Activated T-helper 2 cell treated with anti-CD3 and anti-CD28 coated beads, Interferon-gamma antibody, Interleukin-2, Interleukin-4, amounts not matched to agents 10 μg/mL and 5 μg/mL and 100 μg/mL, durations not matched to agents 14 hours and 24 hours and 36 hours (primary cell): ENCODE measurements at regions of chr10 and their contacts with region 1.

Region 1: DNA sequence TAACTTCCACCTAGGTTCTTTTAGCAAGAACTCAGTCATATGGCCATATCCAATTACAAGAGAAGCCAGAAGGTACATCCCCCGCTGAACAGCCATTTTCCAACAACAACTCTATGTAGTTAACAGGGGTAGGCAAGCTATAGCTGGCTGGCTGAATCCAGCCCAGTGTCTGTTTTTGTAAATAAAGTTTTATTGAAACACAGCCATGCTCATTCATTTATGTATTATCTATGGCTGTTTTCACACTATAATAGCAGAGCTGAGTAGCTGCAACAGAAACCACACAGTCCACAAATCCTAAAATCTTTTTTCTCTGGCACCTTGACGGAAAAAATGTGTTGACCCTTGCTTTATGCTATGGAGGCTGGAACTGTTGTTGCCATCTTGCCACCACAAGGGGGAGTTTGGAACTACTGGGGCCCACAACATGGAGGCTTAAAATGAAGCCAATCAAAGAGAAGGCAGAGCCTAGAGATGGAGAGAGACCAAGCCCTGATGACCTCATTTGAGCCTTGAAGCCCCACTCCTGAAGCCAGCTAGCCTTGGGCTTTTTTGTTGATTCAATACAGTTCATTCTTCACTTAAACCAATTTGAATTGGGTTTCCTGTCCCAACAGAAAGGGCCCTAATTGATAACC is 33.3 kb upstream of the XPNPEP1 start:
- DNase-seq: no peak
- H3K4me3 Mint-ChIP-seq: no peak overlapping the region
- H3K27ac Mint-ChIP-seq: no peak overlapping the region
- H3K4me1 Mint-ChIP-seq: no peaks in the 10 kb centered on the region
- H3K27me3 Mint-ChIP-seq: peaks cover 14% of the 10 kb centered on the region

Region 2: DNA sequence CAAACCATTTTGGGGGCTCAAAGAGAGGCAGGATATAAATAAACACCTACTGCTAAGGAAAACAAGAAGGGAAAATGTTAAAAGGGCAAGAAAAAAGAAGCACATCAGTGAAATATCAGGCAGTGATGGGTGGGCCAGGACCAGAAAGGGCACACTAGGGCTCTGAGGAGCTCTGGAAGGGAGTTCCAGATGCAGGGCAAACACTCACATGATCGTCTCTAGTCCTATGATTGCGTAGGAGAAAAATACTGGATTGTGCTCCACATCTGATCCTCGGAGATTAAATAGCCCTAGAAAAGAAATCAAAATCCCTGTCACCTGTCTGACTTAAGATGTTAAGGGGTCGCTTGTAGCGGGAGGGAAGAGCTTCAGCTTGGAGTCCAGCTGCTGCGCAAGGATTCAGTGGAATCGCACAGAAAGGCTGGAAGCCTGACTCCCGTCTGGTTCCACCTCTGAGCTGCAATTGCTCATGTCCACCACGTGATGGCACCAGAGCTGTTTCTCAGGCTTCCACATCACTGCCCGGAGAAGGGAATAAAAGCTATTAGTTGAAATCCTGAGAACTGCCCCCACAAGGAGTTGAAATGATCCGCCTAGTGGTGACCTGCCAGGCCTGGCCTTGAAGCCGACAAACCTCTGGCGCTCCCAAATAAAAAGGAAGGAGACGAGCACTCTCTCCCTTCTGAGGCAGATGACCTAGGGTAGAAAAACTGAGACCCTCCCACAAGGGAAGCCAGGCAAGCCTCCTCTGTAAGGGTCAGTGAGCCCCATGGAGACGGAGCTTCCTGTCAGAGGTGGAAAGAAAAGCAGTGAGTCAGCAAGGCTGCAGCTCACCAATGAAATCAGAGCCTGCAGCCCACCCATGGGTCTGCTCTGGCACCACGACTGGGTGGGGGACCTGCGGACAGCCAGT is 72.5 kb before region 1 on chr10:
- intact Hi-C with region 1: loop called (anchors 1 kb)
- DNase-seq: peak; percentile 43
- H3K4me3 Mint-ChIP-seq: no peak overlapping the region
- H3K27ac Mint-ChIP-seq: no peak overlapping the region
- H3K4me1 Mint-ChIP-seq: peaks cover 10% of the 10 kb centered on the region
- H3K27me3 Mint-ChIP-seq: no peaks in the 10 kb centered on the region

Region 3: DNA sequence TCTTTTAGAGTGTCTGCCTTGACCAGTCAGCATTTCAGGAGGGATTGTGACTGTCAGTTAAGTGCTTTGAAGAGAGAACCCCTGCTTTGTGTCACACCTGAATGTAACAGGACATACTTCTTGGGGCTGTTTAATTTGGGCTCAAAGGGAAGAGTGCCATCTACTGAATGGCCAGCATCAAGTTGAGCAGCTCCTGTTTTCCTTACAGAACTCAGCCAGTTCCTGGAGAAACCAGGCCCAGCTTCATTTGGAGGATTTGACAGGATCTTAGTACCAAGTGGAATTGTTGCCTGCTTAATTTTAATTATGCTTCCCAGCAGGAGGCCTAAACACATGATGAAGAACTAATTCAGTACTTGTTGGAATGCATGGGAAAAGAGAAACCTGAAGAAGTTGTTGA is 59.5 kb after region 1 on chr10:
- intact Hi-C with region 1: no loop called
- DNase-seq: no peak
- H3K4me3 Mint-ChIP-seq: no peak overlapping the region
- H3K27ac Mint-ChIP-seq: no peak overlapping the region
- H3K4me1 Mint-ChIP-seq: peaks cover 49% of the 10 kb centered on the region
- H3K27me3 Mint-ChIP-seq: no peaks in the 10 kb centered on the region